ENCODE measurements at regions of chr2 and their contacts with region 1.

Region 1: DNA sequence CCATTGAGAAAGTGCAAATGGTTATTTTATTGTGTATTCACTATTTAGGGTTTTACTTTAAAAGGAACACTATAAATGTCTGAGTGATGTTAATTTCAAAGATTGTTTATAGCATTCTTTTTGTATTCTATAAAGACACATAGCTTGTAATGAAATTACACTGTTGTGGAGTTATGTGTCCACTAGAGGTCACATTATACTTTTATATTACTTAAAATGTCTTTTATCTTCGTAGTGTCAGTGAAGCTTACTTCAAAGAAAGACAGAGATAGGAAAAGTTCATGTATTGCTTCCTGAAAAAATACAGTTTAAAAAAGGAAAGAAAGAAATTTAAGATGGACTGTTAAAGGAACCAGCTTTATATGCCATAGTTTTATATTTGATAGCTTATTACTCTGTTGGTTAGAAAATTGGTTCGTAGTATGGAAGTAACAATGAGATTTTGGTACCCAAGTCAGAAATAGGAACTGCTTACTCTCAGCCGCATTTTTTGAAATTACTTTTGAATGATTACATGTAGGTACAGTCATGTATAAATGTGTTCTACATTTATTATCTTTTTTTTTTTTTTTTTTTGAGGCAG is 20.5 kb downstream of the APLF start:
- DNase-seq: no peak
- H3K4me3 ChIP-seq: no peak overlapping the region
- H3K27ac ChIP-seq: no peak overlapping the region
- H3K4me1 ChIP-seq: peaks cover 0 to 3% (median 0%) of the 10 kb centered on the region in 3 donors
- H3K27me3 ChIP-seq: no peaks in the 10 kb centered on the region
- CTCF ChIP-seq: peak in 5 of 6 experiments; percentile 32 to 73 (median 52)
- POLR2A ChIP-seq: no peak

Region 2: DNA sequence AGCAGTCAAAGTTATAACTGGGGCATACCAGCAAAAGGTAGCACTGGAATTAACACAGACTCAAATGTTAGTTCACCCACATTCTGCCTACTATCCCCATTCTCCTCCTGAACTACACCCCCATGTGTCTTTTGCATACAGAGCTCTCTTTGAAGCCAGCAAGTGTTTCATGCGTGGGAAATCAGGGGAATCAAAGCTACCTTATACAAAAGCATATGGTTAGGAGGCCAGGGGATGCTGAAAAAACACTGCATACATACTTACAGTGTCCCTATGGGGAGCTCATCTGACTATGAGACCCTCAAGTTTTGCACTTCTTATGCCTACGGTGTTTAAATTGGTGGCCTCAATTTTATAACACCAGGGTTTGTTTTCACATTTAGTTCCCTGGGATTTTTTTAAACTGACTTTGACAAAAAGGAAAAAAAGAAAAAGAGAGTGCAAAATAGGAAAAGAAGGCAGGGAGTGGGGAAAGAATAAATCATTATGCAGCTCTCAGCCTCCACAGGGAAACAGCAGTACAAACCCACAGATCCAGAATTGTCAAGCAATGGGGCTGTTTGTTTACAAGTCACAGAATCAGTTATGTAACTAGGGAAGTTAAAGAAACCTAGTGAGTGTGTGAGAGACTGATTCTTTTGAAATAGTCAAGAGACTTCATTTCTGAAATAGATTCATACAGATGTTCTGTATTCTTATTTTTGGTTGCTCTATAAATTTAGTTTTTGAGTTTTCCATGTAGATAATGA is 215.4 kb before region 1 on chr2:
- intact Hi-C with region 1: no loop called
- DNase-seq: no peak
- H3K4me3 ChIP-seq: no peak overlapping the region
- H3K27ac ChIP-seq: no peak overlapping the region
- H3K4me1 ChIP-seq: peaks cover 0 to 12% (median 0%) of the 10 kb centered on the region in 3 donors
- H3K27me3 ChIP-seq: no peaks in the 10 kb centered on the region
- CTCF ChIP-seq: no peak
- POLR2A ChIP-seq: no peak

Region 3: DNA sequence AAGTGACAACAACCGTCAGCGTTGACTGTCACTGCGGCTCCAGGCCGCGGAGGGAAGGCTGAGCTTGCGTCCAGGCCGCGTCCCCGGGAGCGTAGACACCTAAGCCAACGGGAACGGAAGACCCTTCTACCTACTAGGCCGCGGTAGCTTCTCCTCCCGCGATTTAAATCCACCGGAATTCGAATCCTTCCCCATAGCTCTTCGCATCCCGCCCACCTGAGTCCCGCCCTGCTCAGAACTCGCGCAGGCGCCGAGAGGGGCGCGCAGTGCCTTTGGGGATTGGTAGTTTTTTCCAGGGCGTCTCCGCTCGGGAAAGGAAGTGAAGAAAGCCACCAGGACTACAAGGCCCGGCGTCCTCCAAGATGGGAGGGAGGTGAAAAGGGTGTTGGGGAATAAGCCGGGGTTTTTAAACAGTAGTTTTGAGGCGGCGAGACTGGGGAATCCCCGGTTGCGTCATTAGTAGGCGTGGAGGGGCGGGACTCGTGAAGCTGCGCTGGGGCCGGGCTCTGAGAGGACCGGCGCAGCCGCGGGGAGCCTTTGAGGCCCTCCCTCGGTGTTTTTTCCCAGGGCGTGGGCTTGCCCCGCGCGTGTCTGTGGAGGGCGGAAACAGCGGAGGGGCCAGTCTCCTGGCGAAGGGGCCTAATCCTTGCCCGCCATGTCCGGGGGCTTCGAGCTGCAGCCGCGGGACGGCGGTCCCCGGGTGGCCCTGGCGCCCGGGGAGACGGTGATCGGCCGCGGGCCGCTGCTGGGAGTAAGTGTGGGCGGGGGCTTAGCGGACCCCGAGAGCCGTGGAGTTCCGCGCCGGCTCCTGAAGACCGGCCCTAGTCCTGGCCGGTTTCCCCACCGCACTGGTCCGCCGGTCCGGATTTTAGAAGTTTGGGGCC is 20.5 kb before region 1 on chr2 and contains the starts of genes APLF and FBXO48:
- intact Hi-C with region 1: no loop called
- DNase-seq: peak; percentile 96
- H3K4me3 ChIP-seq: peak within 1 kb of the TSS; percentile 78 to 92 (median 87)
- H3K27ac ChIP-seq: peak within 1 kb of the TSS; percentile 95 to 98 (median 96)
- H3K4me1 ChIP-seq: peaks cover 6 to 52% (median 11%) of the 10 kb centered on the region in 3 donors
- H3K27me3 ChIP-seq: no peaks in the 10 kb centered on the region
- CTCF ChIP-seq: no peak
- POLR2A ChIP-seq: peak in 3 of 4 donors; percentile 69 to 75 (median 72)
- total RNA-seq, gene APLF: 3.2 to 9.5 (median 4.7) TPM
- total RNA-seq, gene FBXO48: 0.61 to 0.95 (median 0.64) TPM

Region 4: GRCh38 chr2:68669651-68670050 is 181.8 kb after region 1 on chr2:
- intact Hi-C with region 1: no loop called
- DNase-seq: no peak
- H3K4me3 ChIP-seq: no peak overlapping the region
- H3K27ac ChIP-seq: no peak overlapping the region
- H3K4me1 ChIP-seq: no peaks in the 10 kb centered on the region
- H3K27me3 ChIP-seq: no peaks in the 10 kb centered on the region
- CTCF ChIP-seq: no peak
- POLR2A ChIP-seq: no peak

Region 5: DNA sequence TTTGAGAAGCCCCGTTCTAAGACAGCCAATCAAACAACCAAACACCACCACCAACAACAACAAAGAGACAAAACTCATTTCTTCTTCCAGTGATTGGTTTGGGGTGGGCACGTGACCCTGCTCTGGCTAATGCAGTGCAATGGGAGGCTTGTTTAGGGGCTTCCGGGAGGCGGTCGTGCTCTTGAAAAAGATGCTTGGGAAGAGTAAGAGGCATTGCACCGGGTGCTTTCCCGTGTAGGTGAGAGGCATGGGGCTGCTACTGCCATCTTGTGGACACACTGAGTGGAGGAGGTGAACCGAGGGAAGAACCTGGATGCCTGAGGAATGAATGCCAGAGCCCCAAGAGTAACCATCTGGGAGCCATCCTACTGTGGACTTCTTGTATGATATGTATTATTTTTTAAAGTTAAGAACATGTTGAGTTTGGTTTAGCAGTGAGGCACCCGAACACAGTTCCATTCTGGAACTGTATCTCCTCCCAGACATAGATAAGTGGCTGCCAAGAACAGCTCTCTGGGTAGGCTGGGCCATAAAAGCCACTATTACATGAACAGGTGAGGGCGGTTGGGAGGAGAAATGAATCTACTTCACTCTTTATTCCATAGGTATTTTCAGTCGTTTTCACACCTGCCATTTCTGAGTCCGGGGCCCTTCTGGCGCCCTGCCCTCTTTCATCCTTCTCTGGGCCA is 227.6 kb after region 1 on chr2:
- intact Hi-C with region 1: loop called (anchors 10 kb)
- DNase-seq: no peak
- H3K4me3 ChIP-seq: no peak overlapping the region
- H3K27ac ChIP-seq: peak overlapping the region in 3 of 4 donors; percentile 2 to 76 (median 42)
- H3K4me1 ChIP-seq: peaks cover 0 to 10% (median 8%) of the 10 kb centered on the region in 3 donors
- H3K27me3 ChIP-seq: no peaks in the 10 kb centered on the region
- CTCF ChIP-seq: peak; percentile 21 to 65 (median 58)
- POLR2A ChIP-seq: no peak

Region 6: GRCh38 chr2:68849579-68850030 is 361.7 kb after region 1 on chr2:
- intact Hi-C with region 1: no loop called
- DNase-seq: no peak
- H3K4me3 ChIP-seq: no peak overlapping the region
- H3K27ac ChIP-seq: no peak overlapping the region
- H3K4me1 ChIP-seq: no peaks in the 10 kb centered on the region
- H3K27me3 ChIP-seq: no peaks in the 10 kb centered on the region
- CTCF ChIP-seq: no peak
- POLR2A ChIP-seq: no peak

Measured in esophagus squamous epithelium (tissue), 5 donors.